ENCODE measurements at regions of chr20 and their contacts with region 1.

Region 1: GRCh38 chr20:6636209-6637159 is 131.0 kb upstream of the BMP2 start:
- DNase-seq: peak in 1 of 2 donors; percentile 87
- H3K4me3 ChIP-seq: no peak overlapping the region
- H3K27ac ChIP-seq: peak overlapping the region in 2 of 5 donors; percentile 33 to 36
- H3K4me1 ChIP-seq: peaks cover 0 to 10% (median 0%) of the 10 kb centered on the region in 4 donors
- H3K27me3 ChIP-seq: no peaks in the 10 kb centered on the region
- CTCF ChIP-seq: peak in 5 of 7 experiments; percentile 20 to 65 (median 41)
- EP300 ChIP-seq: no peak
- POLR2A ChIP-seq: no peak

Region 2: DNA sequence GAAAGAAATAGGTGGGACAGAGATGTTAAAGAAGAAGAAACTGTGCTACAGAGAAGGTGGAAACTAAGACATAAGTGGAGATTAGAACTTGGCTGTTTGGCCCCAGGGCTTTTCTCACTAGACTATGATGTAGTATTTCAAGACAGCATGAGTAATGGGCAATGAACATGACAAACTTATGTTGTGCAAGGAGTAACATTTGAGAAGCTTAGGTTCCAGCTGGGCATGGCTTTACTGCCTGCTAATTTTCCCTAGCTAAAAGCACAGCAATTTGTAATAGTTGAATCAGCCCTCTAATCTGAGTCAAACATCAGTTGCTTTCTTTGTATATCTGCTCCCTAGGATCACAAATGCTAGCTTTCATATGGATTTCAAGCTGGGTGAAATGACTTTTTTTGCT is 163.3 kb before region 1 on chr20:
- intact Hi-C with region 1: no loop called
- DNase-seq: no peak
- H3K4me3 ChIP-seq: no peak overlapping the region
- H3K27ac ChIP-seq: no peak overlapping the region
- H3K4me1 ChIP-seq: no peaks in the 10 kb centered on the region
- H3K27me3 ChIP-seq: no peaks in the 10 kb centered on the region
- CTCF ChIP-seq: no peak
- EP300 ChIP-seq: no peak
- POLR2A ChIP-seq: no peak

Region 3: DNA sequence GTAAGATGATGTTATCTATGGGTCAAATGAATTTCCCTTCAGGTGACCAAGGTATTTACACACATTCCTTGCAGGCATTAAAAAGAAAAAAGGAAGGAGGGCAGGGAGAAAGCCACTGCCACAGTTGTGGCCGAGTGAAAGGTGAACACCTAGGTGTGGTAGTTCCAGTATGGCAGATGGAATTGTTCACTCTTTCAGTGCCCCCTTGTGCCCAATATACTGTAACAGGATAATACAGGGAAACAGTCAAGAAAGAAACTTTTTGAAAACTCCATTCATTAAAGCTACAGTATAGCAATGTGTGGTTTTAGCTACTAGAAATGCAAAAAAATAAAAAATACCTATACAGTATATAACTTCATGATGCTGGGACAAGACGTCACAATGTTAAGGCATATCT is 183.1 kb after region 1 on chr20:
- intact Hi-C with region 1: loop called (anchors 10 kb)
- DNase-seq: peak in 1 of 2 donors; percentile 73
- H3K4me3 ChIP-seq: no peak overlapping the region
- H3K27ac ChIP-seq: no peak overlapping the region
- H3K4me1 ChIP-seq: no peaks in the 10 kb centered on the region
- H3K27me3 ChIP-seq: no peaks in the 10 kb centered on the region
- CTCF ChIP-seq: peak in 3 of 7 experiments; percentile 35 to 54 (median 39)
- EP300 ChIP-seq: no peak
- POLR2A ChIP-seq: no peak

Measured in stomach (tissue), 19 donors.